ENCODE measurements at regions of chr3 and their contacts with region 1.

Region 1: DNA sequence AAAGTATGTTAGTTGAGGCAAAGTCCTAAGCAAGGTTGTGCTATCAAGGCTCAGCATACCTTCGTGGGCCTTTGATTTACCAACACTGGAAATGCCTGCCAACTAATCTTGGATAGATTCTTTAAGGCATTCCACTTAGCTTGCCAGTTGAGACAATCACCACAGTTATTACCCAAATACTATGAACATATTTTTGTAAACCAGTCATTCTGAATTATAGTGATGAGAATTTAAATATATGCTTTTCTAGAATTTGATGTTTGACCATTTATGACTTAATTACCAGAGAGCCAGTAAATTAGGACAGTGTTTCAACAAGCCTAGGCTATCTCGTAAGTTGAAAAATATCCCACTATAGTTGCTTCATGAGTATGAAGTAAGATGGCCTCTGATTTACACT is 15.5 kb downstream of the TRIM59 start:
- DNase-seq: no peak
- ATAC-seq: no peak
- H3K4me3 ChIP-seq: no peak overlapping the region
- H3K27ac ChIP-seq: no peak overlapping the region
- H3K4me1 ChIP-seq: no peaks in the 10 kb centered on the region
- H3K27me3 ChIP-seq: no peaks in the 10 kb centered on the region
- CTCF ChIP-seq: no peak

Region 2: DNA sequence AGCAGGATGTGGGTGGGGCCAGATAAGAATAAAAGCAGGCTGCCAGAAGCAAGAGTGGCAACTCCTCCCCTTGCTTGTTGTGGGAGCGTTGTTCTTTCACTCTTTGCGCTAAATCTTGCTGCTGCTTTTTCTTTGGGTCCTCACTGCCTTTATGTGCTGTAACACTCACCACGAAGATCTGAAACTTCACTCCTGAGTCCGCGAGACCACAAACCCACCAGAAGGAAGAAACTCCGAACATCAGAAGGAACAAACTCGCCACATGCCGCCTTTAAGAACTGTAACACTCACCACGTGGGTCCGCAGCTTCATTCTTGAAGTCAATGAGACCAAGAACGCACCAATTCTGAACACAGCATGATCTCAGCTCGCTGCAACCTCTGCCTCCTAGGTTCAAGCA is 372.5 kb before region 1 on chr3:
- CTCF ChIA-PET with region 1: no interaction called
- POLR2A ChIA-PET with region 1: interaction called, 10 read pairs
- intact Hi-C with region 1: no loop called
- DNase-seq: no peak
- ATAC-seq: no peak
- H3K4me3 ChIP-seq: no peak overlapping the region
- H3K27ac ChIP-seq: no peak overlapping the region
- H3K4me1 ChIP-seq: no peaks in the 10 kb centered on the region
- H3K27me3 ChIP-seq: no peaks in the 10 kb centered on the region
- CTCF ChIP-seq: no peak

Region 3: DNA sequence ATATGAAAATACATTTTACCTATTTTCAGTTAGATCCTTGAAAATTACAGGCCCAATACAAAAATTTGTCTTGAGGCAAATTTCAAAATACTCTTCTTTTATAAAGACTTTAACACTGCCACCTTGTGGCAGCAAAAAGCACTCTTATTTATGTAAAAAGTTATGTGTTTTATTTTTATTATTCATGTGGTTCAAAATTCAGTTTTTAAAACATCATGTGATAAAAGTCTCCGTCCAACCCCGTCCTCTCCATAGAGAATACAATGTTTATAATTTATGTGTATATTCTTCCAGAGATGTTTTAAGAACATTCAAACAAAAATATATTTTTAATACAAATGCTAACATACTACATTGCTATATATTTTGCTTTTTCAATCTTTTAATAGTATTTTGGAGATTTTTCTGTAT is 52.4 kb after region 1 on chr3:
- CTCF ChIA-PET with region 1: no interaction called
- POLR2A ChIA-PET with region 1: no interaction called
- intact Hi-C with region 1: loop called (anchors 10 kb)
- DNase-seq: peak; percentile 71
- ATAC-seq: peak; percentile 16; the same call in 1 of the 2 replicates
- H3K4me3 ChIP-seq: no peak overlapping the region
- H3K27ac ChIP-seq: no peak overlapping the region
- H3K4me1 ChIP-seq: no peaks in the 10 kb centered on the region
- H3K27me3 ChIP-seq: no peaks in the 10 kb centered on the region
- CTCF ChIP-seq: peak; percentile 78

Measured in PC-3 (cell line).